H1 (cell line): ENCODE measurements at regions of chr12 and their contacts with region 1.

Region 1: DNA sequence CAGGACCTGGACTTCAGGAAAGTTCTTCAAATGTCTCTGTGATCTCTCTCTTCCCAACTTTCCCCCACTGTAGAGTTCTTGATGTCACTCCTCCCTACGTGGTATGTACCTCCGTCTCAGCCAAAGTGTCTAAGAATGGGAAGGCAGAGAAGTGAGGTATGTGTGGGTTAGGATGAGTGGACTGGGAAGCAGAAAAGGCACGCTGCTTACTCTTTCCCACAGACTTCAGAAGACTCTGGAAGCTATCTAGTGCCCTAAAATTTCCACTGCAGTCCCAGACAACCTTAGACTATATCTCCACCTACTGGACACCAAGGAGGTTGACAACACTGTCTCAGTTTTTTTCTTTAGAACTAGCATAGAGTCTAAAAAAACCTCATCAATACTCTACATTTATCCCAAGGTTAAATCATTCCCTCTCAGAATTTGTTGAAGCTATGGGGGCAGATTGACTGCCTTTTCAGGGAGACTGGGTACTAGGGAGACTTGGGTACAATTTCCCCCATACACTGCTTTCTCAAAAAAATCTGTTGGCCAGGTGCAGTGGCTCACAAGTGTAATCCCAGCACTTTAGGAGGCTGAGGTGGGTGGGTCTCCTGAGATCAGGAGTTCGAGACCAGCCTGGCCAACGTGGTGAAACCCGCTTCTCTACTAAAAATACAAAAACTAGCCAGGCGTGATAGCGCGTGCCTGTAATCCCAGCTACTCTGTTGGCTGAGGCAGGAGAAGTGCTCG is 20.6 kb upstream of the ITGA5 start:
- DNase-seq: no peak
- H3K4me3 ChIP-seq: no peak overlapping the region
- H3K27ac ChIP-seq: no peak overlapping the region
- H3K4me1 ChIP-seq: no peaks in the 10 kb centered on the region
- H3K27me3 ChIP-seq: peaks cover 1 to 10% (median 9%) of the 10 kb centered on the region in 4 experiments; a peak in 5 of 7 replicates
- CTCF ChIP-seq: peak in 2 of 3 experiments; percentile 76 to 89; a peak in 3 of 4 replicates
- EP300 ChIP-seq: no peak
- POLR2A ChIP-seq: no peak
- RAD21 ChIP-seq: peak; percentile 94 to 95

Region 2: GRCh38 chr12:54398995-54399793 is 40.5 kb before region 1 on chr12:
- CTCF ChIA-PET with region 1: interaction called, 742 read pairs
- POLR2A ChIA-PET with region 1: interaction called, 10 read pairs
- DNase-seq: peak in 1 of 2 experiments; percentile 98
- H3K4me3 ChIP-seq: no peak overlapping the region
- H3K27ac ChIP-seq: no peak overlapping the region
- H3K4me1 ChIP-seq: no peaks in the 10 kb centered on the region
- H3K27me3 ChIP-seq: no peaks in the 10 kb centered on the region
- CTCF ChIP-seq: peak; percentile 97 to 100 (median 99)
- EP300 ChIP-seq: no peak
- POLR2A ChIP-seq: no peak
- RAD21 ChIP-seq: peak; percentile 96 to 97

Region 3: DNA sequence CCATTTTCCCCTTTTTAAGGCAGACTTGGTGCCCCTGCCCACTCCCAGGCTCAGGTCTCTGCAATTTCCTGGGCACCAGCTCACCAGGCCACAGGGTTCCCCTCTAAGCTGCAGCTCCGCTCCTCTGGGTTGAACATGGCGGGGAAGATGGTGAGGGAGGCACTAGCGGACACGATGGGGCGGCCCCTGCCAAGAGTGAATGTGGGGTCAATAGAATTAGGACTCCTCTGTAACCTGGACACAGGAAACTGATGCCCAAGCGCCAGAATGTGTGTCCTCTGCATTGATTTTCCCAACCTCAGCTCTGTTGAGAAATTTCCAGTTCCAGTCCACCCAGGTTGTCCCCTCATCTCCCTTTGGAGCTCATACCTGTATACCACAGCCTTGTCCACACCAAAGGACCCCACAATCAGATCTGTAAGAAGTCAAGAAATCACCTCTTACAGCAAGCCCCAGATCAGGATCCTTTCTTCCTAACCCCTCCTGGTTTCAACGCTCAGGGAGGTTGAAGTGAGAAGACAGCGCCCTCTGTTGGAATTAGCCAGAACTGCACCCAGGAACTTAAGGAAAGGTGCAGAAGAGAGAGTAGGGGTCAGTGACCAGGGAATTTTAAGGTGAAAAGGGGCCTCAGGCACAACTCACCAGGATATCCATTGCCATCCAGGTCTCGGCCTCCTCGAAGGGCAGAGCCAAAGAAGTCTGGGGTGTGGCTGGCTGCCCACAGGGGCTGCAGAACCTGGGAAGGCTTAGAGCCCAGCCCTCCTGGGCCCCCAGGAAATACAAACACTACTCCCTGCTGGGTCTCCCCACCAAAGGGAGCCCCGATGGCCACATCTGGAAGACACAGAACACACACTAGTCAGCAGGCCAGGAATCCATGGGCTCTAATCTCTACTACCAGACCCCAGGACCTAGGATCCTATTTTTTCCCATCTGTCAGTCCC is 35.4 kb before region 1 on chr12:
- CTCF ChIA-PET with region 1: interaction called, 742 read pairs
- POLR2A ChIA-PET with region 1: interaction called, 10 read pairs
- DNase-seq: peak; percentile 69 to 95
- H3K4me3 ChIP-seq: no peak overlapping the region
- H3K27ac ChIP-seq: no peak overlapping the region
- H3K4me1 ChIP-seq: peaks cover 0 to 1% (median 0%) of the 10 kb centered on the region in 4 experiments; a peak in 1 of 7 replicates
- H3K27me3 ChIP-seq: no peaks in the 10 kb centered on the region
- CTCF ChIP-seq: peak; percentile 66 to 99 (median 83)
- EP300 ChIP-seq: no peak
- POLR2A ChIP-seq: no peak
- RAD21 ChIP-seq: peak; percentile 52 to 68

Region 4: DNA sequence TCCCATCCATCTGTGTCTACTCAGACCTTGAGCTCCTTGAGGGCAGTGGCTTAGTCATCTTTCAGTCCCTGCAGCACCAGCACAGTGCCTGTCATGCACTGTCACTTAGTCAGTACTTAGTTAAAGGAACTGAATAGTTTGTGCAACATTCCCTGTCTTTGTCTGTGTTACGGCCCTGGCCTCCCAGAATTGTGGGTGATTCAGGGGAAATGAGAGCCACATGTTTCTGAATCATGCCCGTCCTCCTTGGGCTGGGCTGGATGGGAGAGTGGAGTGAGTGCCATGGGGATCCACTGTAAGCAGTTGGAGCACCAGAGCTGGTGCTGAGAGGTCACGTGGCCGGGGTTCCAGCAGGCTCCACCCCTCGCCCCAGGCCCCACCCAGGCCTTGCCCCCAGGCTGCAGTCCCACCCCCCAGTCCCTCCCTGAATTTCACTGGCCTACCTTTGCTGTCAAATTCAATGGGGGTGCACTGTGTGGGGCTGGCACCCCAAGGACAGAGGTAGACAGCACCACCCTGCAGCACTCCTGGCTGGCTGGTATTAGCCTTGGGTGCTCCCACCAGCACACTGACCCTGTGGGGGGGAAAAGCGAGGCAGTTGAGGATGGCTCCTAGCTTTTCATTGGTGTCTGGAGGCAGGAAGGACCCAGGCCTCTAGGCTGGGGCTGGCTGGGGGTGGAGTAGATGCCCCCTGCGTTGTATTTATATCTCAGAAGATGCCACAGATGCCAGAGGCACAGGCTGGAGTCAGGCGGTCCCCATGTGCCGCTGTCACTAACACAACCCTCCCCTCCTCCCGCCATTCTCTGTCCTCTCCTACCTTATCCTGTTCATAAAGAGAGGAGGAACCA is 28.1 kb before region 1 on chr12:
- CTCF ChIA-PET with region 1: interaction called, 742 read pairs
- POLR2A ChIA-PET with region 1: no interaction called
- DNase-seq: peak in 1 of 2 experiments; percentile 67
- H3K4me3 ChIP-seq: no peak overlapping the region
- H3K27ac ChIP-seq: no peak overlapping the region
- H3K4me1 ChIP-seq: peaks cover 0 to 7% (median 0%) of the 10 kb centered on the region in 4 experiments; a peak in 2 of 7 replicates
- H3K27me3 ChIP-seq: no peaks in the 10 kb centered on the region
- CTCF ChIP-seq: no peak
- EP300 ChIP-seq: no peak
- POLR2A ChIP-seq: no peak
- RAD21 ChIP-seq: no peak

Region 5: DNA sequence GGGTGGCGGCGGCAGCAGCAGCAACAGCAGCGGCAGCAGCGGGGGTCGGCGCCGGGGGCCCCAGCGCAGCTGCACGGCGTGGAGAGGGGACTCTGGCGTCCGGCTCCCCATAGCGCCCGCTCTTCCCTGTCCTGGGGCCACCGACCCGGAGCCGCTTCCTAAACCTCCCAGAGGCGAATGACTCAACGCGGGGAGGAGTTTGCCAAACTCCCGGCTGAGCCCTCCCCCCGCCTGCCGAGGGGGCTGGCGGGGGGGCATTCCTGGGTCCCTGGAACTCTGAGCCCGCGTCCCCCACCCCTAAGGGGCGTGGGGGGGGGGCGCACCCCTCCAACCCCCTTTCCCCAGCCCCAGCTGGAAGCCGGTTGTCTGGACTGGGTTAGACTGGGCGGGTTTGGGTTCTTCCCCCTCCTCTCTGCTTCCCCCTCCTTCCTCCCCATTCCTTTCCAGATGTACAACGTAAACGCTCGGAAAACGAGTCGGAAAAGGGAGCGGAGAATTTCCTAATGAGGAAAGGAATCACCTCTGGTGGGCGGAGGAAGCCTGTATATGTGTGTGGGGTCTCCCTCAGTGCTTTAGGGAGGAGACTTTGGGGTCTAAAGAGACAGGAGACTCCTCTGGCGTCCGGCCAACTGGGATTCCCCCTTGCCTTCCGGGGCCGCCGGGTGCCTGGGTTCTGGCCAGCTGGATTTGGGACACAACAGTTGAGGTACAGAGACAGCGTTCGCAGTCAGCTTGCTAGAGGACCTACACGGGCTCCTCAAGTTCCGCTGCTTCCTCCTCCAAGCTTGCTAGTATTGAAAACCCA is 20.4 kb before region 1 on chr12 and contains the start of gene ITGA5:
- CTCF ChIA-PET with region 1: interaction called, 121 read pairs
- POLR2A ChIA-PET with region 1: interaction called, 3 read pairs
- DNase-seq: peak in 1 of 2 experiments; percentile 76
- H3K4me3 ChIP-seq: peak within 1 kb of the TSS; percentile 67 to 92 (median 76)
- H3K27ac ChIP-seq: no peak within 1 kb of the TSS
- H3K4me1 ChIP-seq: peaks cover 6 to 16% (median 9%) of the 10 kb centered on the region in 4 experiments
- H3K27me3 ChIP-seq: peaks cover 0 to 22% (median 18%) of the 10 kb centered on the region in 4 experiments; a peak in 6 of 7 replicates
- CTCF ChIP-seq: no peak
- EP300 ChIP-seq: no peak
- POLR2A ChIP-seq: no peak
- RAD21 ChIP-seq: no peak
- total RNA-seq, gene ITGA5: 19.0 and 19.4 TPM in 2 replicates